Posterior vena cava (tissue), 2 donors: ENCODE measurements at regions of chr11 and their contacts with region 1.

Region 1: GRCh38 chr11:112588252-112588694 is 327.6 kb upstream of the PLET1 start:
- DNase-seq: peak; percentile 85

Region 2: DNA sequence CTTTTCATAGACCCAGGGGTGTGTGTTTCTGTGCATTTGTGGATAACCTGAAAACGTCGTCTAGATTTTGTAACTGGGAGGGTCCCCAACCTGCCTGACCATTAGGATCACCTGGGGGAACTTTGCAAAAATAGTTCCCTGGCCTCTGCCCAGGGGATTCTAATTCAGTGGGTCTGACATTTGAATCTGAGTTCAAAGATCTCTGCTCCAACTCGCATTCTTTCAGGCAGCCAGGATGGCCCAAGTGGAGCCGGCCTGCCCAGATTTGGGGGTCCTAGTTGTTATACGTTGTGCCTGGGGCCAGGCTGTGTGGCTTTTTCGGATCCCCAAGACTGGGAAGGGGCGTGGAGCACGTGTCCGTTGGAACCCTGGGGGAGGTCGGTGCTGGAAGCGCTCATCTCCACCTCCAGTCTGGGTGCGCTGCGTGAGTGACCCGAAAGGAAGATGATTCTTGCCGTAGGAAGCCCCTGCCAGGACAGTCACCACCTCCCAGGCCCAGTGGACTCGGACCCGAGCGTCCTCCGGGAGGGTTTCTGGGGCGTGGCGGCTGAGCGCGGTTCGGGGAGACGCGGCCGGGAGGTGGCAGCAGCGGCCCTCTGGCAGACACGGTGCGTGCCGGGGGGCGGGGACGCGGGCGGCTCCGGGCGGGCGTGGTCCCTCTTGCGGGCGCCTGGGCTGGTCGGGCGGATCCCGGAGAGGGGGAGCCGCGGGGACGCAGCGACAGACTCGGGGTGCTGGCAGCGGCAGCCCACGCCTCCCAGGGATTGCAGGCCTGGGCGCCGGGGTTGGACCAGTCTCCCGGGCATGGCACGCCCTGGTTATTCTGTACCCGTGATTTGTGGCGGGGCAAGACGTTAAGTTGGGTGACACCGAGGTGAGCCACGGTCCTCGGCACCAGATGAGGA is 298.4 kb before region 1 on chr11:
- intact Hi-C with region 1: loop called in 1 of 2 experiments (anchors 10 kb)
- DNase-seq: peak; percentile 95

Region 3: GRCh38 chr11:112795142-112795815 is 207.0 kb after region 1 on chr11:
- intact Hi-C with region 1: loop called (anchors 5 to 10 kb)
- DNase-seq: no peak

Region 4: DNA sequence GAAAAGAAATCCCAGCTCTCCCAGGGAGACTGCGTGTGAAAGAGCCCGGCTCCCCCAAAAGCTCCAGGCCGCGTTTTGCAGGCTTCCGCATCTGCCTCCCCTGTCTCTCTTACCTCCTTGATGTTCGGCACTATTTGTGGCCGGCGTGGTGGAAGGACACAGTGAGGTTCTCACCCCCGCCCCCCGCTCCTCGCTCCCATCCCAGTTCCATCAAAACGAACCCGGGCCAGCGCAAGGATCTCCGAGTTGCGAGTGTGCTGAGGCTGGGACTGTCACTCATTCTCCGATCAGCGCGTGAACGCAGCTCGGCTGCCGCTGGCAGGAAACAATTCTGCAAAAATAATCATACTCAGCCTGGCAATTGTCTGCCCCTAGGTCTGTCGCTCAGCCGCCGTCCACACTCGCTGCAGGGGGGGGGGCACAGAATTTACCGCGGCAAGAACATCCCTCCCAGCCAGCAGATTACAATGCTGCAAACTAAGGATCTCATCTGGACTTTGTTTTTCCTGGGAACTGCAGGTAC is 372.9 kb after region 1 on chr11 and contains the start of gene NCAM1:
- intact Hi-C with region 1: loop called in 1 of 2 experiments (anchors 5 kb)
- DNase-seq: peak; percentile 88
- total RNA-seq, gene NCAM1: 76.8 to 134 TPM

Region 5: GRCh38 chr11:113289431-113290187 is 701.3 kb after region 1 on chr11:
- intact Hi-C with region 1: loop called in 1 of 2 experiments (anchors 10 kb)
- DNase-seq: no peak

Region 6: DNA sequence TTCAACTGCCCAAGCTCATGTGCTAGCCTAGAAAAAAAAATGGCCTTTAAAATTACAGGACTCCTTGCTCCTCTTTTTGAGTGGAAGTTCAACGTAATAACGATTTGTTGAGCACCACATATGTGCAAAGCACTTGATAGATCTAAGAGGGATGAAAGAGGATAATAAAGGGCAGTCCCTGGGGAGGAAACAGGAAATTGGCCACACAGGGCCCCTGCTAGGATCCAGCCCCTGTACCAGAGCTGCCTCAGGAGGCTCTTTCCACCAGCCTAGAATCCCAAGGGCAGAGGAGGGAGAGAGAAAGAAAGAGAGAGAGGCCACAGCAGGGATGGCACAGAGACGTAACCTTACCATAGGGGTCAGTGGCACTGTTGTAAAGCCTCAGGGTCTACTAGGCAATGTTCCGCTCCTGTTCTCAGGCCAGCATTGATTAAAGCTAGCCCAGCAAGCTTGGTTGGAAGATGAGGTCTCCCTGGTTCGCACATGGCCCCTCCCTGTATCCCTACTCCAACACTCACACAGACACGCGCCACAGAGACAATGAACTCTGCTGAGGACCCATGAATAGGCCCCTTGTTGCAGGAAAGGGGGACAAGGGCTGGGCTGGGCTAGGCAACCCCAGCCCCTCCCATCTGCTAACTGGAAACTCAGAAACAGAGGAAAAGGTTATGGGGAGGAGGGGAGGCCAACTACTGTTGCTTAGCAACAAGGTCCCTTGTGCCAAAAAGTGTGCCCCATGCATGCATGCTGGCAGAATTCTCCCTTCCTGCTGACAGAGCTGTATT is 1117.8 kb after region 1 on chr11 and contains the start of gene TMPRSS5:
- intact Hi-C with region 1: no loop called
- DNase-seq: no peak
- total RNA-seq, gene TMPRSS5: 0.51 to 0.76 TPM